HAP-1 (cell line): ENCODE measurements at regions of chr22 and their contacts with region 1.

Region 1: DNA sequence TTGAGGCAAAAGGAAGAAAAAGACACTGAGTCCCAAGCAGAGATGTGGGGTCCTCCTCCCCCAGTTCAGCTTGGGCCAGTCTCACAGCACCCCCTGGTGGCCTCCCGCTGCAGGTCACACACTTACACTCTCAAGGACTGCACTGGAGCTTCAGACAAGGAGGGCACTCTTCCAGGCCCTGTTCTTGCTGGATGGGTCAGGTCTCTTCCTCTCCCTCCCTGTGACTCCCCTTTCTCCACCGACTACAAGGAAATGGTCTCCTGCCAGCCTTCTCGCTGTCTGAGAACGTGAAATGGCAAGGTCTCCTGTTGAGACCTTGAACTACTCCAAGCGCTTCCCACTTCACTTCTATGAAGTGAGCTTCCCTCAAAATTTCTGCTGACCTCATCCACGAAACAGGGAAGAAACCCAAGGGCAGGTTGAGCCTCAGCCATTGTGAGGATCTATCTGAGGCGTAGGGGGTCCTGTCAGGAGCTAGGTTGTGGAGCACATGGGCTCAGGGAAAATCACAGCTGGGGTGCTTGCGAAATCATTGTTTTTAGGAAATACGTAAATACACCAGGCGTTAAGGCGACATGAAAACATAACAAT is 11.2 kb upstream of the IGLL1 start:
- DNase-seq: peak; percentile 63 to 84
- H3K4me3 ChIP-seq: no peak overlapping the region
- H3K4me1 ChIP-seq: no peaks in the 10 kb centered on the region
- H3K27me3 ChIP-seq: no peaks in the 10 kb centered on the region

Region 2: DNA sequence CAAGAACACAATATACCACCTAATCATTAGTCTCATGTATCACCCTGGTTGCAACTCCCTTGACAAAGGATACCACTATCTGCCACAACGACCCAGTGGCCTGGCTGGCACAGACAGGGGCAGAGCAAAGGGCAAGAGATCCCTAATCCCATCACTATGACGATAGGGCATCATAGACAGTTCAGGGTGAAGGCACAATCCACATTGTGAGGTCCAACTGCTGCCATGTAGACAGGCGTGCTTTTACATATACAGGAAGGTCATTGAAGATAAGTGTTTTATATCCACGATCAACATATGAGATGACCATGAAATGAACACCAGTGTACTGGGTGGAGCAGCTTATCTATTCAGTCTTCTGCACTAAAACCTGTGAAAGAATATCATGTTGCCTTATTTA is 105.8 kb before region 1 on chr22:
- in situ Hi-C with region 1: no loop called
- DNase-seq: no peak
- H3K4me3 ChIP-seq: no peak overlapping the region
- H3K4me1 ChIP-seq: peaks cover 7% of the 10 kb centered on the region
- H3K27me3 ChIP-seq: peaks cover 7% of the 10 kb centered on the region

Region 3: DNA sequence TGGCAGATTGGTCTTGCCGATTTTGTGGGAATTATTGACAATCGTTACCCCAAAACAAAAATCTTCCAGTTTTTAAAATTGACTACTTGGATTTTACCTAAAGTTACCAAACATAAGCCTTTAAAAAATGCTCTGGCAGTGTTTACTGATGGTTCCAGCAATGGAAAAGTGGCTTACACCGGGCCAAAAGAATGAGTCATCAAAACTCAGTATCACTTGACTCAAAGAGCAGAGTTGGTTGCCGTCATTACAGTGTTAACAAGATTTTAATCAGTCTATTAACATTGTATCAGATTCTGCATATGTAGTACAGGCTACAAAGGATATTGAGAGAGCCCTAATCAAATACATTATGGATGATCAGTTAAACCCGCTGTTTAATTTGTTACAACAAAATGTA is 48.4 kb before region 1 on chr22:
- in situ Hi-C with region 1: loop called (anchors 10 kb)
- DNase-seq: no peak
- H3K4me3 ChIP-seq: no peak overlapping the region
- H3K4me1 ChIP-seq: peaks cover 11% of the 10 kb centered on the region
- H3K27me3 ChIP-seq: no peaks in the 10 kb centered on the region; the same call in 1 of the 2 replicates